B cell (primary cell): ENCODE measurements at regions of chr7 and their contacts with region 1.

Region 1: DNA sequence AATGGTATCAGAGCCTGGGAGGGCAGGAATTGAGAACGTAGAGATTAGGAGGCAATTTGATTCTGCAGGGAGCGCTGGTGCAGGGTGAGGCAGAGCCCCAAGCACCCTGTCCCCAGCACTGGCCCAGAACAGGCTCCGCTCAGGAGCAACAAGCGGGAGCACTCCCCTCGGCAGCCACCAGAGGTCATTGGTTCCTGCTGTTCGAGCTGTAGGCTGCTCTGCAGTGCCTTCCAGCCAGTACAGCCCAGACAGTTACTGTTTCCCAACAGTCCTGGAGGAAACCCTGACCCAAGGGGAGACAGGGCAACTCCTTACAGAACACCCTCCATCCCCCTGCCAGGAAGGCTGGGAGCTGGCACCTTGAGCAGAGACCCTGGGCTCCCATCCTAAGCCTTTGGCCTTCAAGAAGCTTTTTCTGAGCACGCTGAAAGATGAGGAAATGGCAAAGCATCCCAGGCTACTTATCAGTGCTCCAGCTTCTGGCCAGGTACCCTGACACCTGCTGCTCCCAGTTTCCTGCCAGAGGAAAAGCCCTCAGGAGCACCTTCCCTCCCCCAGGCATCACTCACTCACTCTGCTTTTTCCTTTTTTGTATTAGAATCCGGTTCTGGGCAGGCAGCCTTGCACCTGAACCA is 71.2 kb upstream of the EFCAB10 start:
- DNase-seq: peak; percentile 67
- ATAC-seq: peak; percentile 78
- H3K4me3 ChIP-seq: no peak overlapping the region
- H3K4me3 Mint-ChIP-seq: no peak overlapping the region
- H3K27ac ChIP-seq: no peak overlapping the region
- H3K27ac Mint-ChIP-seq: no peak overlapping the region
- H3K4me1 ChIP-seq: no peaks in the 10 kb centered on the region
- H3K4me1 Mint-ChIP-seq: peaks cover 1% of the 10 kb centered on the region
- H3K27me3 ChIP-seq: no peaks in the 10 kb centered on the region
- H3K27me3 Mint-ChIP-seq: no peaks in the 10 kb centered on the region
- CTCF ChIP-seq: peak; percentile 80

Region 2: GRCh38 chr7:105367458-105367857 is 285.0 kb before region 1 on chr7:
- CTCF ChIA-PET with region 1: no interaction called
- POLR2A ChIA-PET with region 1: no interaction called
- intact Hi-C with region 1: no loop called
- DNase-seq: no peak
- ATAC-seq: no peak
- H3K4me3 ChIP-seq: no peak overlapping the region
- H3K4me3 Mint-ChIP-seq: no peak overlapping the region
- H3K27ac ChIP-seq: no peak overlapping the region
- H3K27ac Mint-ChIP-seq: no peak overlapping the region
- H3K4me1 ChIP-seq: peaks cover 0 to 6% of the 10 kb centered on the region in 2 donors
- H3K4me1 Mint-ChIP-seq: peaks cover 48% of the 10 kb centered on the region
- H3K27me3 ChIP-seq: no peaks in the 10 kb centered on the region
- H3K27me3 Mint-ChIP-seq: no peaks in the 10 kb centered on the region
- CTCF ChIP-seq: no peak

Region 3: DNA sequence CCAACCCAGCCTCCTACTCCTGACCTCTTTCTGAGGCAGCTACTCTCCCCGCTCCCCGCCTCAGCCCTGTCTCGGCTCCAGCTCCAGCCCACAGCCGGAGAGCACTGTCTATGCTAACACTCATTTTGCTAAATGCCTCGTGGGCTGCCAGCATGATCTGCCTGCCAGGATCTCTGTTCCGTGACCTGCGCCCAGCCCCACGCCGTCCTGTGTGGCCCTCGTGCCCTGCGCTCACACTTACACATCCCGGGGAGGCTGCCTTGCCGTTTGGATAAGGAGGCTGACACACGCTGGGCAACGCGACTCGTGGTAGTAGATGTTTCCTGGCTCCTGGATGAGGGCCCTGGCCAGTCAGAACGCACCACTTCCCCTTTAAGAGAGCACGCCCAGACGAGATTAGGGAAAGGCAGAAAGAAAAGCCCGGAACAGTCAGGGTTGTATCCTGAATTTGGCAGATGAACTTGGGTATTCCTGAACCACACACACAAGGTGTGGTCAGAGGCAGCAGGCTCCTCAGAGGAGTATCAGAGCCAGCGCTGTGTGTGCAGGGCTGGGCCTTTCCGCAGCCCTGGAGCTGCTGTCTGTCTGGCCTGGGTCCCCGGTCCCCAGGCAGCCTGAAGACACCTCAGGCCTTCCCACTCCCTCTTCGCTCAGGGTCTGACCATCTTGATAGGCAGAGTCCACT is 26.5 kb after region 1 on chr7:
- CTCF ChIA-PET with region 1: interaction called, 22 read pairs
- POLR2A ChIA-PET with region 1: no interaction called
- intact Hi-C with region 1: no loop called
- DNase-seq: peak; percentile 70
- ATAC-seq: peak; percentile 44
- H3K4me3 ChIP-seq: peak overlapping the region; percentile 48 to 82 (median 65)
- H3K4me3 Mint-ChIP-seq: peak overlapping the region; percentile 96
- H3K27ac ChIP-seq: peak overlapping the region; percentile 56 to 70
- H3K27ac Mint-ChIP-seq: peak overlapping the region; percentile 94
- H3K4me1 ChIP-seq: peaks cover 37 to 45% of the 10 kb centered on the region in 2 donors
- H3K4me1 Mint-ChIP-seq: peaks cover 57% of the 10 kb centered on the region
- H3K27me3 ChIP-seq: no peaks in the 10 kb centered on the region
- H3K27me3 Mint-ChIP-seq: no peaks in the 10 kb centered on the region
- CTCF ChIP-seq: no peak

Region 4: DNA sequence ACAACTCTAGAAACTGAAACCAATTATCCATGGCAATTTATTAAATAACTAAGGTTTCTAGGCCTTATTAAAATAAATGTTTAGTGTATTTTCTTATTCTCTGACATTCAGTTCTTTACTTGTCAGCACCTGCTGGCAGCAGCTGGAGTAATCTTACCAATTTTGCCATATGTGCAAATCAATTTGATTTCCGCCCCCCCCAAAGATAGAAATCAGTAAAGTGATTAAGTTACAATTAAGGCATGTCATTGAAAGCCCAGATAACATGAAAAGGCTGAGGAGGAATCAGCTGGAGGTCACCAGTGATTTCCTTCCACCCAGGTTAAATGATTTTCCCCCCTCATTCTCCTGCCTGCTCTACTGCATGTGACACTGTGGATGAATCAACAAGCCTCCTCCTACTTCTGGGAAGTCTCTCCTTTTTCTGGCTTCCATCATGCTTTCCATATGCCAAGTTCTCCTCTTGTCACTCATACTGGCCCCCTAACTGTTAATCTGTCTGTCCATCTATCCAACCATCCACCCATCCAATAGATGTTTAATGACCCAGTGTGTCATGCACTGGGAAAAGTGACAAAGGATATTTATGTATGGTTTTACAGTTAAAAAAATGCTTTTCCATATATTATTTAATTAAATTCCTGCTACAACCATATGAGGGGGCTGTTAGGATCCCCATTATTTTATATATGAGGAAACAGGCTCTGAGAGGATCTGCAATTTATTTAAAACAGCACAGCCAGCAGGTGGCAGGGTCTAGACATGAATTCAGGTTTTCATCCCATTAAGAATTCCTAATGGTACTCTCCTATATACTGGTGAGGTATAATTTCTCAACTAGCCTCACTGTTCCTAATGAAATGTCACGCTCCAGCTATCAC is 107.4 kb after region 1 on chr7:
- CTCF ChIA-PET with region 1: interaction called, 17 read pairs
- POLR2A ChIA-PET with region 1: no interaction called
- intact Hi-C with region 1: loop called (anchors 2 kb)
- DNase-seq: peak; percentile 44
- ATAC-seq: no peak
- H3K4me3 ChIP-seq: no peak overlapping the region
- H3K4me3 Mint-ChIP-seq: no peak overlapping the region
- H3K27ac ChIP-seq: no peak overlapping the region
- H3K27ac Mint-ChIP-seq: no peak overlapping the region
- H3K4me1 ChIP-seq: no peaks in the 10 kb centered on the region
- H3K4me1 Mint-ChIP-seq: no peaks in the 10 kb centered on the region
- H3K27me3 ChIP-seq: no peaks in the 10 kb centered on the region
- H3K27me3 Mint-ChIP-seq: no peaks in the 10 kb centered on the region
- CTCF ChIP-seq: peak; percentile 55

Region 5: DNA sequence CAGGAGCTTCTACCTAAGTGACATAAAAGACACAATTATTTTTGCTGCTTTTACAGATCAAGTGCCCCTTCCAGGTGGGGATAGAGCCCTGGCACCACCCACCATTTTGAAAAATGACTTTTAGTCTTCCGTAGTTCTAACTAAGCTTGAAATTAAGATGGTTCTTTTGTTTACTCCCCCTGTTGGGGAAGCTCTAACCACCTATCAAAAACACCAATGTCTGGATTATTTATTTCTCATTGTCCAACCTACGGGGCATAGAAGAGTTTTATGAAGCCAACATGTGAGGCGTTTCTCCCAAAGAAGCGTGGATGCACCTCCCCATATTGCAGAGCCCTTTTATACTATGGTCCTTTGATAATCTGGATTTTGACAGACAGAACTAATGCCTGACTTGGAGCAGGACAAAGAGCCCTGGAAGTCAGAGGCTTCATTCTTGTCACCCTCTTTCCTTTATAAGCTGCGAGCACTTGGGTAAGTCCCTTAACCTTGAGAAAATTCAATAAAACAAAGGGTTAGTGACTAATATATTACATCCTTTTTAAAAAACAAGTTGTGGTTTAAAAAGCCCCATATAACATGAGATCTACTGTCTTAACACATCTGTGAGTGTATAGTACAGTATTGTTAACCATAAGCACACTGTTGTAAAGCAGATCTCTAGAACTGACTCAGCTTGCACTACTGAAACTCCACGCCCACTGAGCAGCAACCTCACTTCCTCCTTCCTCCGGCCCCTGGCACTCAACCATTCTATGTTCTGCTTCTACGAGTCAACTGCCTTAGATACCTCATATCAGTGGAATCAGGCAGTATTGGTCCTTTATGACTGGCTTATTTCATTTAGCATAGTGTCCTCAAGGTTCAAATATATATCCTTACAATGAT is 156.5 kb after region 1 on chr7:
- CTCF ChIA-PET with region 1: interaction called, 8 read pairs
- POLR2A ChIA-PET with region 1: no interaction called
- intact Hi-C with region 1: loop called (anchors 1 kb)
- DNase-seq: peak; percentile 83
- ATAC-seq: peak; percentile 97
- H3K4me3 ChIP-seq: no peak overlapping the region
- H3K4me3 Mint-ChIP-seq: peak overlapping the region; percentile 30
- H3K27ac ChIP-seq: peak overlapping the region; percentile 38 to 58
- H3K27ac Mint-ChIP-seq: peak overlapping the region; percentile 46
- H3K4me1 ChIP-seq: peaks cover 21 to 41% of the 10 kb centered on the region in 2 donors
- H3K4me1 Mint-ChIP-seq: peaks cover 41% of the 10 kb centered on the region
- H3K27me3 ChIP-seq: no peaks in the 10 kb centered on the region
- H3K27me3 Mint-ChIP-seq: no peaks in the 10 kb centered on the region
- CTCF ChIP-seq: no peak

Region 6: GRCh38 chr7:106009403-106010226 is 357.1 kb after region 1 on chr7:
- CTCF ChIA-PET with region 1: interaction called, 10 read pairs
- POLR2A ChIA-PET with region 1: no interaction called
- intact Hi-C with region 1: loop called (anchors 1 kb)
- DNase-seq: peak; percentile 80
- ATAC-seq: peak; percentile 98
- H3K4me3 ChIP-seq: no peak overlapping the region
- H3K4me3 Mint-ChIP-seq: peak overlapping the region; percentile 46
- H3K27ac ChIP-seq: no peak overlapping the region
- H3K27ac Mint-ChIP-seq: peak overlapping the region; percentile 28
- H3K4me1 ChIP-seq: peaks cover 17 to 18% of the 10 kb centered on the region in 2 donors
- H3K4me1 Mint-ChIP-seq: peaks cover 18% of the 10 kb centered on the region
- H3K27me3 ChIP-seq: peaks cover 0 to 4% (median under 1%) of the 10 kb centered on the region in 4 experiments
- H3K27me3 Mint-ChIP-seq: peaks cover 4% of the 10 kb centered on the region
- CTCF ChIP-seq: peak; percentile 88

Region 7: GRCh38 chr7:106166655-106167342 is 514.3 kb after region 1 on chr7:
- CTCF ChIA-PET with region 1: interaction called, 10 read pairs
- POLR2A ChIA-PET with region 1: no interaction called
- intact Hi-C with region 1: loop called (anchors 1 kb)
- DNase-seq: peak; percentile 73
- ATAC-seq: peak; percentile 47
- H3K4me3 ChIP-seq: no peak overlapping the region
- H3K4me3 Mint-ChIP-seq: no peak overlapping the region
- H3K27ac ChIP-seq: no peak overlapping the region
- H3K27ac Mint-ChIP-seq: no peak overlapping the region
- H3K4me1 ChIP-seq: no peaks in the 10 kb centered on the region
- H3K4me1 Mint-ChIP-seq: peaks cover 10% of the 10 kb centered on the region
- H3K27me3 ChIP-seq: peaks cover 0 to 8% (median 0%) of the 10 kb centered on the region in 4 experiments
- H3K27me3 Mint-ChIP-seq: no peaks in the 10 kb centered on the region
- CTCF ChIP-seq: peak; percentile 95